Prostate gland (tissue), 2 donors: ENCODE measurements at regions of chr2 and their contacts with region 1.

Region 1: GRCh38 chr2:16665748-16666448 is at the start of gene CYRIA:
- DNase-seq: peak; percentile 59
- H3K4me3 ChIP-seq: peak within 1 kb of the TSS; percentile 59 to 61
- H3K27ac ChIP-seq: peak within 1 kb of the TSS; percentile 60 to 63
- H3K4me1 ChIP-seq: peaks cover 4% of the 10 kb centered on the region
- H3K27me3 ChIP-seq: no peaks in the 10 kb centered on the region
- CTCF ChIP-seq: no peak
- POLR2A ChIP-seq: no peak
- total RNA-seq, gene CYRIA: 6.5 to 10.3 TPM

Region 2: DNA sequence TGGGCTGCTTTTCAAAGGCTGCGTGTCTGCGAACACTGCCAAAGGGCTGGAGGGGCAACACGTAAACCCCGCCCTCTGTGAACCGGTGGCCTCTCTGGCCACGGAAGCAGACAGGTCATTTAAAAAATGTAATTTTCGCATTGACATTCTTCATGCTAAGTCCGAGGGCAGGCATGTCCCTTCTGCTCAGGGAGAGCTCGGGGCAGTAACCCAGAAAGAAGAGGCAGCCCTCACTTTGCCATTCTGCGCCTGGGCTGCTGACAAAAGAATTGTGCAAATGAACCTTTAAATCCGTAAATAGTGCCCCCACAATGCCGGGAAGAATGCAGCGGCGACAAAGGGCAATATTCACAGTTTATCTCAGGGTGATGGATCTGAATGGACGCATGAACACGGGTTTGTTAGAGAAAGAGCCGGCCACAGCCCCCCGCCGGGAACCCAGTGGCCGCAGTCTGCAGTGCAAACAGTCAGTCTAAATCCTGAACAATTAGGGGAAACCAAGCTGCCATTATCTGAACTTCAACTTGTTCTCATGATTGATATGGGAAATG is 499.4 kb before region 1 on chr2:
- intact Hi-C with region 1: no loop called
- DNase-seq: no peak
- H3K4me3 ChIP-seq: no peak overlapping the region
- H3K27ac ChIP-seq: no peak overlapping the region
- H3K4me1 ChIP-seq: no peaks in the 10 kb centered on the region
- H3K27me3 ChIP-seq: no peaks in the 10 kb centered on the region
- CTCF ChIP-seq: no peak
- POLR2A ChIP-seq: no peak

Region 3: GRCh38 chr2:16513626-16514025 is 152.3 kb before region 1 on chr2:
- intact Hi-C with region 1: no loop called
- DNase-seq: no peak
- H3K4me3 ChIP-seq: no peak overlapping the region
- H3K27ac ChIP-seq: no peak overlapping the region
- H3K4me1 ChIP-seq: no peaks in the 10 kb centered on the region
- H3K27me3 ChIP-seq: peaks cover 3% of the 10 kb centered on the region
- CTCF ChIP-seq: no peak
- POLR2A ChIP-seq: no peak

Region 4: GRCh38 chr2:17753803-17754663 is 1088.1 kb after region 1 on chr2 and contains the starts of genes GEN1 and SMC6:
- intact Hi-C with region 1: loop called (anchors 10 kb)
- DNase-seq: peak; percentile 86
- H3K4me3 ChIP-seq: peak within 1 kb of the TSS; percentile 93 to 97
- H3K27ac ChIP-seq: peak within 1 kb of the TSS; percentile 96 to 97
- H3K4me1 ChIP-seq: no peaks in the 10 kb centered on the region
- H3K27me3 ChIP-seq: no peaks in the 10 kb centered on the region
- CTCF ChIP-seq: no peak
- POLR2A ChIP-seq: no peak
- total RNA-seq, gene GEN1: 5.0 to 15.3 TPM
- total RNA-seq, gene SMC6: 8.8 to 36.1 TPM